Prostate gland (tissue), 2 donors: ENCODE measurements at regions of chr19 and their contacts with region 1.

Region 1: DNA sequence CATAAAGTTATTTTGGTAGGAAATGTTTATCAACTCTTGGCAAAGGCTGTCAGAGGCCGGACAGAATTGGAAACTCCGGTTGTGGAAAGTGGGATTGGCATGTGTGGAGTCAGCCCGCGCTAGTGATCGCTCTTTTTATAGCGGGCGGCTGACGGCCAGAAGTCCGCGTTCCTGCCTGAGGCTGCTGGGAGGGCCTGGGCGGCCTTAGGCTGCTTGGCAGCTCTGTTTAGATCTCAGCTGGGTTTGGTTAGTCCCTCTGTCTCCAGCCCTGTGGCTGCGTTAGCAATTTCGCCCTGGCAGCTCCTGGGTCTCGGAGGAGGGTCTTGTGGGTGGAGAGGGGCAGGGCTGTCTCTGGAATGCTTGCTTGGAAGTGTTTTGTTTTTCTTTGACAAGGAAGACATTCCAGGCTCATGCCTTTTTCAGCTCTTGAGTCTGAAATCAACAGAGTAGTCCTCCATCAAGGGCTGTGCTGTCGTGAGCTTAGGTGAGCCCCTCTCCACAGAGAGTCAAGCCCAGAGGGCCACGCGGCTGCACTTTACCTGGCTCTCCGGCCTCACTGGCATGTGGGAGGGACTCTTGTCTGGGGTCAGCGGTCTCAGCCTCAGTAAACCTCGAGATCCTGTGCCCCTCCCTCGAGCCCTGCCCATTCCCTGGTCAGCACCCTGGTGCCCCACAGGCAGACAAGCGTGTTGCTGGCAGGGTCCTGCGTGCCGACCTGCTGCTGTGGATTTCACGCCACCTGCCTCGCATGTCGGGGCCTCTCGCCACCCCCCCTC is 22.5 kb downstream of the DOT1L start:
- DNase-seq: peak; percentile 84
- H3K4me3 ChIP-seq: peak overlapping the region in 1 of 2 donors; percentile 6
- H3K27ac ChIP-seq: peak overlapping the region; percentile 74 to 84
- H3K4me1 ChIP-seq: peaks cover 13% of the 10 kb centered on the region
- H3K27me3 ChIP-seq: no peaks in the 10 kb centered on the region
- CTCF ChIP-seq: peak in 1 of 4 experiments; percentile 7
- POLR2A ChIP-seq: no peak

Region 2: DNA sequence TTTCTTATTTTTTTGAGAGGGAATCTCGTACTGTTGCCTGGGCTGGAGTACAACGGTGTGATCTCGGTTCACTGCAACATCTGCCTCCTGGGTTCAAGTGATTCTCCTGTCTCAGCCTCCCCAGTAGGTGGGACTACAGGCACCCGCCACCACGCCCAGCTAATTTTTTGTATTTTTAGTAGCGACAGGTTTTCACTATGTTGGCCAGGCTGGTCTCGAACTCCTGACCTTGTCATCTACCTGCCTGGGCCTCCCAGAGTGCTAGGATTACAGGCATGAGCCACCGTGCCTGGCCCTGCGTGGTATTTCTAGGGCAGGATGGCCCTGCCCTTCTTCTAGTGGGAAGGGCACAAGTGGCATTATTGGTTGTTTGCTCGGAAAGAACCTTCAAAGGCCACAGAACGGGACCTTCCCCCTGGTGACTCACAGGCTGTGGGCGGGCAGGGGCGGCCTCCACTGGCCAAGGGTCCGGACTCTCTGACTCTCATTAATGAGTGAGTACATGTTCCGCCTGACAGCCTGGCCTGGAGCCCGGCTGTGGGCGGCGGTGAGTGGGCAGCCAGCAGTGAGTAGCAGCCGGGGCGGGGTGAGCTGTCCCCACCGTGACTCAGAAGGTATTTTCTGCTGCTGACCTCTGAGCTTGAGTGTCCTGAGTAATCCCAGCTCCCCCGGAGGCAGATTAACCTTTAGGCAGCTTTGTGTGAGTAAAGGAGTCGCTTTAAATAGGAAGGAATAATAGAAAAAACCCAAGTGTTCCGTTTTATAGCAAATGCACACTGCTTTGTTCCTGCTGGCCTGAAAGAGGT is 17.4 kb before region 1 on chr19:
- intact Hi-C with region 1: loop called (anchors 2 kb)
- DNase-seq: peak; percentile 93
- H3K4me3 ChIP-seq: no peak overlapping the region
- H3K27ac ChIP-seq: peak overlapping the region; percentile 76 to 89
- H3K4me1 ChIP-seq: peaks cover 26% of the 10 kb centered on the region
- H3K27me3 ChIP-seq: no peaks in the 10 kb centered on the region
- CTCF ChIP-seq: no peak
- POLR2A ChIP-seq: peak; percentile 64

Region 3: GRCh38 chr19:2221918-2222317 is 35.7 kb after region 1 on chr19:
- intact Hi-C with region 1: loop called (anchors 5 kb)
- DNase-seq: no peak
- H3K4me3 ChIP-seq: no peak overlapping the region
- H3K27ac ChIP-seq: no peak overlapping the region
- H3K4me1 ChIP-seq: no peaks in the 10 kb centered on the region
- H3K27me3 ChIP-seq: no peaks in the 10 kb centered on the region
- CTCF ChIP-seq: peak in 1 of 4 experiments; percentile 22
- POLR2A ChIP-seq: no peak

Region 4: GRCh38 chr19:2246801-2247361 is 60.6 kb after region 1 on chr19:
- intact Hi-C with region 1: no loop called
- DNase-seq: no peak
- H3K4me3 ChIP-seq: no peak overlapping the region
- H3K27ac ChIP-seq: no peak overlapping the region
- H3K4me1 ChIP-seq: no peaks in the 10 kb centered on the region
- H3K27me3 ChIP-seq: peaks cover 4% of the 10 kb centered on the region
- CTCF ChIP-seq: no peak
- POLR2A ChIP-seq: no peak